Dorsolateral prefrontal cortex (tissue), 120 donors: ENCODE measurements at regions of chr6 and their contacts with region 1.

Region 1: DNA sequence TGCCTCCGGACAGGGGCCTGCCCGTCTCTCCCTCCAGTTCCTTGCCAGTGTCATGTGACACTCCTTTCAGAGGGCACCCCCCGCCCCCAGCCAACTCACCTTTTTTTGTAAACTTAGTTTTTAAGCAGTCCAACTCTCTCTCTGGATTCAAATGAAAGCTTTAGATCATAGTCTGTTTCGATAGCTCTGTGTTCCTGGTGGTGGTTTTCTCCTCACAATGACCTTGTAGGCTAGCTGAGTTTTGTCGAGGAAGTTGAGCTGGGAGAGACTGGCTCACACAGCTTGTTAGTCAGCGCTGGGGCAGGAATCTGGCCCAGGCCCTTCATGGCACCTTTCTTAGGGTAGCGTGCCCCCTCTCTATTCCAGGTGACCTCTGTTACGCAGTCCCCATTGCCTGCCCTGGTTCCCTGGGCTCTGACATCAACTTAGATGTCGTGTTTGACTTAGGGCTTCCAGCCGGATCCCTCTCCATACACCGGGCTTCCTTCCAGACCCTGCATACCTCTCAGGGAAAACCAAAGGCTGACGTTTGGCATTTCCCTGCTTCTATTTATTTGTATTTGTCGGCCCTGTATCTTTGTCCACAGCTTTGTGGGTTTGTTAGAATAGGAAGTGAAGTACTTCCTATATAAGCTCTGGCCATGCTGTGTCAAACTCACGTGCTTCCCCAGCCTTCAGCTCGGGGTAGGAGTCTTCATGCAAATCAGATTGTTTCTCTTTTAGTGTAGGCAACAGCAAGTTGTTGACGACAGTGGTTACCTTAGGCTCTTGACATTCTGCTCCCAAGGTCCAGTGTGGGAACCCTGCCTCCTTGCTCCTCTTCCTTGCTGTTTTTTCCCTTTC is 12.7 kb downstream of the IGF2R start:
- DNase-seq: no peak
- H3K4me3 ChIP-seq: peak overlapping the region in 4 of 59 donors; percentile 2 to 31 (median 6)
- H3K27ac ChIP-seq: peak overlapping the region in 25 of 59 donors; percentile 4 to 75 (median 36)
- H3K27me3 ChIP-seq: no peaks in the 10 kb centered on the region
- CTCF ChIP-seq: no peak

Region 2: GRCh38 chr6:160000280-160000704 is 18.7 kb after region 1 on chr6:
- intact Hi-C with region 1: no loop called
- DNase-seq: no peak
- H3K4me3 ChIP-seq: peak overlapping the region in 1 of 59 donors; percentile 11
- H3K27ac ChIP-seq: peak overlapping the region in 3 of 59 donors; percentile 8 to 32 (median 16)
- H3K27me3 ChIP-seq: no peaks in the 10 kb centered on the region
- CTCF ChIP-seq: no peak

Region 3: DNA sequence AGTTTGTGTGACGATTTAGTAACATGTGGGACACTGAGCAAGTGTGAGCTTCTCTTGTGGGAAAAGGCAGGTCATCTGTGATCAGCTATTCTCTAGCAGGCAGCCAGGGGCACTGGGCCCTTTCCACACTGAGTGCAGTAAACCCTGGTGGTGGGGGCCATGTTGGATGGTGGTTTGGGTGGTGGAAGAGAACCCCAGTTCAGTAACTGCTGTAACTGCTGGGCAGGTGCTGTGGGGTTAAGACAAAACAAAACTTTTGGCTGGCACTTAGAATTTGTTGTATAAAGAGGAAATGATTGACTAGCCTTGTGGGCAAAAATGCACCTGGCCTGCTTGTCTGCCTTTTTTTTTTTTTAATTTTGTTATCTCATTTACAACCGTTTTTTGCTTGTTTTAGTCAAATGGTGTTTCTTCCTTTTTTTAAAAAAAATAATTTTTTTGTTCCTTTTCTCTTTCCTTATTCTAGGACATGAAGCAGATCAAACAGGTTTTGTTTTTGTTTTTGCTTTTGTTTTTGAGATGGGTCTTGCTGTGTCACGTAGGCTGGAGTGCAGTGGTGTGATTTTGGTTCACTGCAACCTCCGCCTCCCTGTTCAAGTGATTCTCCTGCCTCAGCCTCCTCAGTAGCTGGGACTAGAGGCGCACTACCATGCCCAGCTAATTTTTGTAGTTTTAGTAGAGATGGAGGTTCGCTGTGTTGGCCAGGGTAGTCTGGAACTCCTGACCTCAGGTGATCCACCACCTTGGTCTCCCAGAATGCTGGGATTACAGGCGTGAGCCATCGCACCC is 47.1 kb after region 1 on chr6:
- intact Hi-C with region 1: loop called in 1 of 2 experiments (anchors 5 kb)
- DNase-seq: no peak
- H3K4me3 ChIP-seq: no peak overlapping the region
- H3K27ac ChIP-seq: peak overlapping the region in 2 of 59 donors; percentile 69 to 70
- H3K27me3 ChIP-seq: no peaks in the 10 kb centered on the region
- CTCF ChIP-seq: no peak